CD4-positive, alpha-beta memory T cell (primary cell): ENCODE measurements at regions of chr2 and their contacts with region 1.

Region 1: DNA sequence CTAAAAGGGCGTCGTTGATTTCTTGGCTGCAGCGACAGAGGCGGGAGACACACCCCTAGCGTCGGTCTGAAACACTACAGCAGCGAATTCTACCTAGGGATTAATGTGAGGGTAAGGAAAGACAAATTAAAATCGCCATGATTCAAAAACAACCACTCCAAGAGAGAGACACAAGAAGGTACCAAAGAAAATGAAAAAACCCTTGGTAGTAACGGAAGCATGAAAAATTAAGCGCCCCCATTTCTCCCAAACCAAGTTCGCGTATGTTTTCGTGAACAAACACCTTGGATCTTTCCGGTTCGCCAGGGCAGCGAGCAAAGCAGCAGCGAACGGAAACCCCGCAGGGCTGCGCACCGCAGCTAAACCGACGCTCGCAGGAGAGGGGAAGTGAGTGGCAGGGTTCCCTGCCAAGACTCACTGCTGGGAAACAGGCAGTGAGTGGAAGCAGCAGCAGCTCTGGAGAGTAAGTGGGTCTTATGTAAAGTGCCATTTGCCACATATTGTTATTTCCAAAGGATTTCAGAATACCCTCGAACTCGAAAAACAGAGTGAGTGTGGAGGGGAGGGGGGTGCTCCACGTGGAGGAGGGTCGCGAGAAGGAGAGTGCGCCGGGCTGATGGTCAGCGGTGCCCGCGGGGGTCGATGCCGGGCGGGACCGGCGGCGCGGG is 1.0 kb downstream of the PPP3R1 start:
- DNase-seq: peak; percentile 81 to 93 (median 86)
- H3K4me3 ChIP-seq: peak overlapping the region; percentile 66 to 83
- H3K4me3 Mint-ChIP-seq: peak overlapping the region in 7 of 8 donors; percentile 87 to 100 (median 94)
- H3K27ac ChIP-seq: peak overlapping the region; percentile 91
- H3K27ac Mint-ChIP-seq: peak overlapping the region in 6 of 7 donors; percentile 91 to 99 (median 97)
- H3K4me1 ChIP-seq: peaks cover 70% of the 10 kb centered on the region
- H3K4me1 Mint-ChIP-seq: peaks cover 20 to 59% (median 34%) of the 10 kb centered on the region in 4 donors
- H3K27me3 ChIP-seq: no peaks in the 10 kb centered on the region
- H3K27me3 Mint-ChIP-seq: peaks cover 0 to 4% of the 10 kb centered on the region in 2 donors

Region 2: DNA sequence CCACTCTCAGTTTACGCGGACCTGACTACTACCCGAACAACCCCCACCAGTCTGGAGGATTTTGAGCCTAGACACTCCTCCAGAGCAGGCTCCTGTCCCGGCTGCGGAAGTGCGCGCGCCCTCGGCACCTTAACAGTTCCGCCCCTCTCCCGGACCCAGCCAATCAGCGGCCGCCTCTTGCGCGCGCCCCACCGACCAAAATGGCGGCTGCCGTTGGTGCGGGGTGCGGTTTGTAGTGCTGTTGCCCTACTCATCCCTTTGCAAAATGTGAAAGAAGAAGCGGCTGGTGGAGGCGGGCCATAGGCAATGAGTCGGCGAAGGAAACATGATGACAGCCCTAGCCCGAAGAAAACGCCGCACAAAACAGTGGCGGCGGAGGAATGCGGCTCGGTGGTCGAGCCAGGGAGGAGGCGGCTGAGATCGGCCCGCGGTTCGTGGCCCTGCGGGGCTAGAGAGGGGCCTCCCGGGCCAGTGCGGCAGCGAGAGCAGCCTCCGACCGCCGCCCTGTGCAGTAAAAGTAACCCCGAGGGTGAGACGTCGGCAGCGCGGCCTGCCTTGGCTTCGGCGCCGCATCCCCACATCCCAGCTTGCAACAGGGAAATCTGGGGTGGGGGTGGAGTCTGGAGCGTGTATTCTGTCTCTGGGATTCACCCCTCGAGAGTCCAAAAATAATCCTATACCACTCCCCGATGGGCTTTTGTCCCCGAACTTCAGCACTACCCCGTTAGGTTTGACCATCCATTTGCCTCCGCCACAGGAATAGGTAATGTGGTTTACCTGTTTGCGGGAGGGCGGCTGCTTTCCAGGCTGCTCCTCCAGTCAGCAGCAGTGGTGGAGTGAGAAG is 854.0 kb before region 1 on chr2 and contains the start of gene ETAA1:
- CTCF ChIA-PET with region 1: no interaction called
- POLR2A ChIA-PET with region 1: no interaction called
- intact Hi-C with region 1: loop called (anchors 5 kb)
- DNase-seq: peak; percentile 92 to 93 (median 92)
- H3K4me3 ChIP-seq: peak within 1 kb of the TSS; percentile 74 to 84
- H3K4me3 Mint-ChIP-seq: peak within 1 kb of the TSS; percentile 94 to 99 (median 99)
- H3K27ac ChIP-seq: peak within 1 kb of the TSS; percentile 86
- H3K27ac Mint-ChIP-seq: peak within 1 kb of the TSS; percentile 93 to 100 (median 99)
- H3K4me1 ChIP-seq: peaks cover 13% of the 10 kb centered on the region
- H3K4me1 Mint-ChIP-seq: peaks cover 8 to 23% (median 12%) of the 10 kb centered on the region in 4 donors
- H3K27me3 ChIP-seq: no peaks in the 10 kb centered on the region
- H3K27me3 Mint-ChIP-seq: no peaks in the 10 kb centered on the region
- total RNA-seq, gene ETAA1: 13.6 to 15.1 TPM

Region 3: DNA sequence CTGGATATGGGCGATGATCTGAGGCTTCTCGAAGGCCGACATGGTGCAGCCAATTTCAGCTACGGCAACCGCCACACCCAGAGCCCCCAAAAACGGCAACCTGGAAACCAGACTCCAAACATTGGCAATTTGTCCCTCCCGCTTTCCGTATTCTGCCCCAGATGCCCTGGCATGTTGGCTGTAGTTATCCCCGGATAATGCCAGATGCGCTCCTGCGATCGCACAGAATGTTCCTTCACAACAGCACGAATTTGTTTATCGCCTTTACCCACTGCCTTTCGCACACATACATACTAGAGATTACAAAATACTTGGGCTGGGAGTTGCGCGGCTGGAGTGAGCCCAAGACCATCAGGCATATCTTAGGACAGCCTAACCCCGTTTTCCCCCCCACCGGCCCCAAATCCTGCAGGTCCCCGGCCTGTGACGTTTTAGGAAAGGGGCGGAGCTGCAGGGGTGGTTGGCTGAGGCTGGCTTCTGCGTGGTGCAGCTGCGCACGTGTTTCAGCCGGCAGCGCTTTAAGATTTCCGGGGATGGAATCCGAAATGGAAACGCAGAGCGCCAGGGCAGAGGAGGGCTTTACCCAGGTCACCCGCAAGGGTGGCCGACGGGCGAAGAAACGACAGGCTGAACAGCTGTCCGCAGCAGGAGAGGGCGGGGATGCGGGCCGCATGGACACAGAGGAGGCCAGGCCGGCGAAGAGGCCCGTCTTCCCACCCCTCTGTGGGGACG is 93.8 kb before region 1 on chr2 and contains the start of gene PNO1:
- CTCF ChIA-PET with region 1: interaction called, 7 read pairs
- POLR2A ChIA-PET with region 1: interaction called, 49 read pairs
- intact Hi-C with region 1: loop called (anchors 1 kb)
- DNase-seq: peak; percentile 97 to 98 (median 98)
- H3K4me3 ChIP-seq: peak within 1 kb of the TSS; percentile 82 to 97
- H3K4me3 Mint-ChIP-seq: peak within 1 kb of the TSS; percentile 95 to 99 (median 98)
- H3K27ac ChIP-seq: peak within 1 kb of the TSS; percentile 97
- H3K27ac Mint-ChIP-seq: peak within 1 kb of the TSS; percentile 99 to 100 (median 100)
- H3K4me1 ChIP-seq: peaks cover 40% of the 10 kb centered on the region
- H3K4me1 Mint-ChIP-seq: peaks cover 29 to 65% (median 45%) of the 10 kb centered on the region in 4 donors
- H3K27me3 ChIP-seq: no peaks in the 10 kb centered on the region
- H3K27me3 Mint-ChIP-seq: peaks cover 0 to 2% of the 10 kb centered on the region in 2 donors
- total RNA-seq, gene PNO1: 8.7 to 11.3 TPM

Region 4: DNA sequence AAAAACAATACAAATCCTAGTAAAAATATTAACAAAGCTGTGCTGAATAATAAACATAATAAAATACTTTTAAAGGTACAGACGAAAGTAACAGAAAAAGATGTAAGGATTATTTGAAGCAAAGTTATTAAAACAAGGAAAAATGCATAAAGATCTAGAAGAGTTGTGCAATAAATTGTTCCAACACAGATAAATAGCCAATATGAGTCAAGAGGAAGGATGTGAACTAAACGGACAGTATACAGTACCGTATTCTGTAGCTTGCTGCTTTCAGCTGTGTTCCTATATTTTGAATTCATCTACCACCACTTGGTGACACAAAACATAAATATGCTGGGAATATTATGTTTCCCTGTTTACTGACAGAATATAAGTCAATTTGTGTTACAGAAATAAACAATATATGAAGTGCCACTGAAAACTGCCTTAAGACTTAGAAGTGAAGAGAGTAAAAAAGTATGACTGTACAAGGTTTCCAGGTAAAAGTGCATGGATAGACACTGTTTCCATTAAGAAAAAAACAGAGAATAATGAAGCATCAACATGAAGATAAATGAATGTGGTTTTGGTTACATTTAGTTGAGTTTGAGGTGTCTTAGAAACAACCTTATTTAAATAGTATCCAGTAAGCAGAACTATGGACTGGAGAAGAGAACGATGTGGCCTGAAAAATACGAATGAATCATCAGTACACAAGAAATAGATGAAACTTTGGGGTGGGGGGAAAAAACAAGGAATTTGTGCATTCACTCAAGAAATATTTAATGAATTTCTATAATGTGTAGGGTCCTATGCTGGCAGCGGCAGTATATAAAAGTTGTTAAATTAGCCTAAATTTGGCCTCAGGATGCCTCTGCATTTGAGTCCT is 12.1 kb before region 1 on chr2:
- CTCF ChIA-PET with region 1: interaction called, 3 read pairs
- POLR2A ChIA-PET with region 1: interaction called, 7 read pairs
- intact Hi-C with region 1: loop called (anchors 2 kb)
- DNase-seq: no peak
- H3K4me3 ChIP-seq: no peak overlapping the region
- H3K4me3 Mint-ChIP-seq: peak overlapping the region in 7 of 8 donors; percentile 13 to 72 (median 63)
- H3K27ac ChIP-seq: no peak overlapping the region
- H3K27ac Mint-ChIP-seq: peak overlapping the region; percentile 5 to 87 (median 38)
- H3K4me1 ChIP-seq: peaks cover 95% of the 10 kb centered on the region
- H3K4me1 Mint-ChIP-seq: peaks cover 55 to 86% (median 71%) of the 10 kb centered on the region in 4 donors
- H3K27me3 ChIP-seq: no peaks in the 10 kb centered on the region
- H3K27me3 Mint-ChIP-seq: no peaks in the 10 kb centered on the region

Region 5: GRCh38 chr2:68282811-68283418 is 31.6 kb after region 1 on chr2:
- CTCF ChIA-PET with region 1: interaction called, 9 read pairs
- POLR2A ChIA-PET with region 1: interaction called, 5 read pairs
- intact Hi-C with region 1: loop called (anchors 1 kb)
- DNase-seq: peak; percentile 38 to 51 (median 46)
- H3K4me3 ChIP-seq: no peak overlapping the region
- H3K4me3 Mint-ChIP-seq: no peak overlapping the region
- H3K27ac ChIP-seq: no peak overlapping the region
- H3K27ac Mint-ChIP-seq: no peak overlapping the region
- H3K4me1 ChIP-seq: peaks cover 5% of the 10 kb centered on the region
- H3K4me1 Mint-ChIP-seq: peaks cover 0 to 8% (median 0%) of the 10 kb centered on the region in 4 donors
- H3K27me3 ChIP-seq: peaks cover 7% of the 10 kb centered on the region
- H3K27me3 Mint-ChIP-seq: peaks cover 4 to 12% of the 10 kb centered on the region in 2 donors